ENCODE measurements at regions of chr14 and their contacts with region 1.

Region 1: GRCh38 chr14:20343092-20343861 is at the start of gene PARP2:
- DNase-seq: peak; percentile 100
- H3K4me3 ChIP-seq: peak within 1 kb of the TSS; percentile 73
- H3K27ac ChIP-seq: peak within 1 kb of the TSS; percentile 91
- H3K4me1 ChIP-seq: peaks cover 4% of the 10 kb centered on the region
- H3K27me3 ChIP-seq: no peaks in the 10 kb centered on the region
- CTCF ChIP-seq: no peak
- total RNA-seq, gene PARP2: 67.8 and 67.9 TPM in 2 replicates

Region 2: GRCh38 chr14:20327005-20327869 is 16.0 kb before region 1 on chr14:
- CTCF ChIA-PET with region 1: interaction called, 11 read pairs
- POLR2A ChIA-PET with region 1: no interaction called
- intact Hi-C with region 1: no loop called
- DNase-seq: peak; percentile 76
- H3K4me3 ChIP-seq: peak overlapping the region; percentile 2
- H3K27ac ChIP-seq: peak overlapping the region; percentile 60
- H3K4me1 ChIP-seq: peaks cover 23% of the 10 kb centered on the region
- H3K27me3 ChIP-seq: no peaks in the 10 kb centered on the region
- CTCF ChIP-seq: peak; percentile 74

Region 3: DNA sequence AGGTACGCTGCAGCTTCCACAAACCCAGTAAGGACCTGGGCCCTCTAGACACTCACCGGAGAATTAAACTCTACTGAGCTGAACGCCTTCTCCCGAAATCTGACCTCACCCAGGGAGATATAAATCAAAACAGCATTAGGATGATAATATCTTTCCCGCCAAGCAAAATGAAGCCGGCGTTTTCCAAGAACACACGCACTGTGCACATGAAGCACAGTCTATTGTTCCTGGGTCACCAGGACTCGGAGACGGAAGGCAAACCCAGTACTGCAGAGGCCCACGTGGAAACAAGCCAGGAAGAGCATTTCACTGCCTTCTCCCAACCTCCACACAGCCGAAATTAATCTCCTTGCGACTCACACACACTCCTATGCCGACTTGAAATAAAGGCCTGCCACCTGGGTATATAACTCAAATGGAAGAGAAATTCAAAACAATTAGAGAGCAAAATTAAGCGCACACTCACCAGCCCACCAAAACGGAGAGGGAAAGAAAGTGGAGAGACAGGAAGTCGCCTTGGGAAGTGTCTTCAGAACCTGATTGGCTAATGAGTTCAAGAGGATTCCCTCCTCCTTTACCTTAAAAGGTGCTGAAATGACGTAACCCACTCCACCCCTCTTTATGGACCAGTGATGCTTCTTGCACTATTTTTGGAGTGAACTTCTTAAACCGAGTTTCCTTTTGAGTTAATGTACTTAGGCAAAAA is 10.3 kb before region 1 on chr14 and contains the start of gene CCNB1IP1:
- CTCF ChIA-PET with region 1: interaction called, 11 read pairs
- POLR2A ChIA-PET with region 1: no interaction called
- intact Hi-C with region 1: loop called (anchors 1 kb)
- DNase-seq: peak; percentile 93
- H3K4me3 ChIP-seq: peak within 1 kb of the TSS; percentile 59
- H3K27ac ChIP-seq: peak within 1 kb of the TSS; percentile 87
- H3K4me1 ChIP-seq: peaks cover 27% of the 10 kb centered on the region
- H3K27me3 ChIP-seq: no peaks in the 10 kb centered on the region
- CTCF ChIP-seq: no peak
- total RNA-seq, gene CCNB1IP1: 117 and 121 TPM in 2 replicates

Region 4: DNA sequence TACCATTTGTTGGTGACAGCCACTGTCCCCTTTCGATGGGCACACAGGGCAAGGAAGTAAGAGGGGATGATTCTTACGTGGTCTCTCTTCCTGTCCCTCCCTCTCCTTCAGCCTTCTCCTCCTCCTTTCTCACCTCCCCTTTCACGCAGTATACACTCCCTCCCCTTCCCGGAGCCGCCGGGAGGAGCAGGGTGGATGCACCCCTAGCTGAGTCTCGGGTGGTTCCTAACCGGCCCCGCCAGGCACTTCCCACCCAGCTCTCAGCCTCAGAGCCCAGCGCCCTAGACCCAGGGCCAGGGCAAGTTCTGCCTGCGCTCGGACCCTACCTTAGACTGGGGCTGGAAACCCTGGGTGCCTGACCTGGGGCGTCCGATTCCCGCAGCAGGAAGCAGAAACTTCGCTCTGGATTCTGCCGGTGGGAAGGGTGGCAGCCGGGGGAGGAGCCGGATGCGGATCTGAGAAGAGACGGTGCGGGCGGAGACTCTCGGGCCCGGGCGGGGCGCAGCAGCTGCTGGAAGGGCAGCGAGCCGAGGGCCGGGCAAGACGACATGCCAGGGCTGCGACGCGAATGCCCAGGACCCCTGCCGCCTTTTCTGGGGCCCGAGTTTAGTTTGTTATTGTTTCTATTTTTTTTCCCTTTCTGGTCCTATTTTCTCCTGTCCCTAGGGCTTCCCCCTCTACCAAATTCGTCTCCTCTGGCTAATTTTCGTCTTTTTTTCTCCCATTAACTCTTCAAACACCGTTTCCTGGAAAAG is 69.9 kb after region 1 on chr14 and contains the start of gene TEP1:
- CTCF ChIA-PET with region 1: interaction called, 6 read pairs
- POLR2A ChIA-PET with region 1: interaction called, 15 read pairs
- intact Hi-C with region 1: no loop called
- DNase-seq: peak; percentile 89
- H3K4me3 ChIP-seq: peak within 1 kb of the TSS; percentile 78
- H3K27ac ChIP-seq: peak within 1 kb of the TSS; percentile 85
- H3K4me1 ChIP-seq: peaks cover 13% of the 10 kb centered on the region
- H3K27me3 ChIP-seq: no peaks in the 10 kb centered on the region
- CTCF ChIP-seq: no peak
- total RNA-seq, gene TEP1: 12.3 and 15.9 TPM in 2 replicates

Region 5: GRCh38 chr14:20454516-20455354 is 111.5 kb after region 1 on chr14 and contains the starts of genes APEX1 and OSGEP:
- CTCF ChIA-PET with region 1: no interaction called
- POLR2A ChIA-PET with region 1: no interaction called
- intact Hi-C with region 1: loop called (anchors 1 kb)
- DNase-seq: peak; percentile 99
- H3K4me3 ChIP-seq: peak within 1 kb of the TSS; percentile 82
- H3K27ac ChIP-seq: peak within 1 kb of the TSS; percentile 96
- H3K4me1 ChIP-seq: peaks cover 9% of the 10 kb centered on the region
- H3K27me3 ChIP-seq: no peaks in the 10 kb centered on the region
- CTCF ChIP-seq: no peak
- total RNA-seq, gene APEX1: 277 and 299 TPM in 2 replicates
- total RNA-seq, gene OSGEP: 59.2 and 67.8 TPM in 2 replicates

Region 6: DNA sequence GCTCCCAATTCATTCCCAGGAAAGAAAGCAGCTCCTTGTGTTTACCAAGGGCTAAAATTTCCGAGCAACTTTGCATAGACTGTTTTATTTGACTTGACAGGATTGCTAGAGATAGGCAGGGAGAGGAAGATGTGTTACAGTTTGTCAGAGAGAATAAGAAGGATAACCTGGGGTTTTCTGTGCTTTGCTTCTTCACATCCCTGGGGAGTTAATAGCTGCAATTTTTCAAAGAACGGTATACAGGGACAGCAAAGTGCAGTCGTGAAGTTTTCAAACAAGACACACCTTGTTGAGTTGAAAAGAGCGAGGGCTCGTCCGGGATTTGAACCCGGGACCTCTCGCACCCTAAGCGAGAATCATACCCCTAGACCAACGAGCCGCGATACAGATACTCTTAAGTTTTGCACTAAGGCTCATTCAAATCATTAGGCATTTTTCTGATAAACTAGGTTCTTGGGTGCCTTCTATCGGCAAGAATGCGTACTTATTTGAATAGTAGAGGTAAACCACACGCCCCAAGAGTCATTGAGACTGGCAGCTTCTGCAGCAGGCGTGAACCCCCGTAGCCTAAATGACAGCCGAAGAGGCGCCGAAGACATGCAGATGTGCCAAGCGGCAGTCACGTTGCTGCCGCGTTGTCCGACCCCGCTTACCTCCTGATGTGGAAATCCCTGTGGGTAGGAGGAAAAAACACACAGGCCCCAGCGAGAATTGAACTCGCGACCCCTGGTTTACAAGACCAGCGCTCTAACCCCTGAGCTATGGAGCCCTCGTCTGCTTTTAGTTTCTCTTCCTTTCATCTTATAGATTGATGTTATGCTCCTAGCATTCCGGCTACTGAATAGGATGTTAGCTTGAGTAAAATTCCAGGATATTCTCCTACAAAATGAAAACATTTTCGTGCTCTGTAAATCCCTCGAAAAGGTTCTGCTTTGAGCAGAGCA is 270.1 kb after region 1 on chr14:
- CTCF ChIA-PET with region 1: no interaction called
- POLR2A ChIA-PET with region 1: interaction called, 7 read pairs
- intact Hi-C with region 1: loop called (anchors 1 kb)
- DNase-seq: peak; percentile 99
- H3K4me3 ChIP-seq: peak overlapping the region; percentile 52
- H3K27ac ChIP-seq: peak overlapping the region; percentile 45
- H3K4me1 ChIP-seq: peaks cover 14% of the 10 kb centered on the region
- H3K27me3 ChIP-seq: no peaks in the 10 kb centered on the region
- CTCF ChIP-seq: peak; percentile 77

Region 7: GRCh38 chr14:20632682-20633428 is 289.6 kb after region 1 on chr14:
- CTCF ChIA-PET with region 1: no interaction called
- POLR2A ChIA-PET with region 1: no interaction called
- intact Hi-C with region 1: loop called (anchors 2 kb)
- DNase-seq: peak; percentile 96
- H3K4me3 ChIP-seq: peak overlapping the region; percentile 58
- H3K27ac ChIP-seq: no peak overlapping the region
- H3K4me1 ChIP-seq: peaks cover 7% of the 10 kb centered on the region
- H3K27me3 ChIP-seq: peaks cover 6% of the 10 kb centered on the region
- CTCF ChIP-seq: no peak

Measured in A673 (cell line).